Kidney (tissue), 22 donors: ENCODE measurements at regions of chr1 and their contacts with region 1.

Region 1: DNA sequence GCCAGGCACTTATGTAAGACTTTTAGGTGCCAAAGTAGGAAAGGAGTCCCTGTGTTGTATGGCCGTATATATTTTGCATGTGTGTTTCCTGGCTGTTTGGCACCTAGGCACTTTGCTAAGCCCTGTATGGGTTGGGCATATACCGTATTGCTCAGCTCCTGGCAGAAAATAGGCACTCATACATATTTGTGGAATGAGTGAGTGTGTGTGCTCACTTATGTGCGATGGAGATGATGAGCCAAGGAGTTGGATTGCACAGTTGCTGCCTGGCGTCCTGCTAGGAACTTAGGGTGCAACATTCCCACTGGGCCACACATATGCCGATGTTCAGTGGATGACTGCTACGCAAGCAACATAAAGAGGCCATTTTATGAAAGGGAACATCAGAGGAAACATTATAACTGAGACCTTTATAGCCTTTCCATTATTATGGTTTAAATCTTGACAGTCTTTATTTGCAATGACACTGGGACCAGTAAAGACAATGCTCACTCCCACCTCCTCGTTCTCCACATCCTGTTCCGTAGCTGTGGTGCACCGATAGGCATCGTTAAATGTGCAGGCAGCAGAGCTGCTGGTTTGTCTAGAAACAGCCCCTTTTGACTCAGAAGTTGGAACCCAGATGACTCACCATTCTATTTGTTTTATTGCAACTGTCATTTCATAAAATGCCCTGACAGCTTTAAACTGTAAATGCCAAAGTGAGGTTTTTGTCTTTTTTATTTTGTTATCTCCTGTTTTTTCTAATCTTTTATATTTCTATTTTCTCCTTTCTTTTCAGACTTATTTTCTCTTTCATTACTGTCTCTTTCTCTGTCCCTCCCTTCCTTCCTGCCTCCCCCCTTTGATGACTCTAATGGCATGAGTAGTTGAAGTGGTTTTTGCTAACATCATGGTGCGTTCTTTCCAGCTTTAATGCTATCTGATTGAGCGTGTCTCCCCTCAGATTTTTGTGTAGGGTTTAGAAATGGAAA is 36.1 kb downstream of the PEX14 start:
- DNase-seq: no peak
- H3K4me3 ChIP-seq: peak overlapping the region in 1 of 3 donors; percentile 21
- H3K27ac ChIP-seq: no peak overlapping the region
- H3K4me1 ChIP-seq: peaks cover 0 to 23% (median 16%) of the 10 kb centered on the region in 3 donors
- H3K27me3 ChIP-seq: no peaks in the 10 kb centered on the region
- CTCF ChIP-seq: no peak

Region 2: DNA sequence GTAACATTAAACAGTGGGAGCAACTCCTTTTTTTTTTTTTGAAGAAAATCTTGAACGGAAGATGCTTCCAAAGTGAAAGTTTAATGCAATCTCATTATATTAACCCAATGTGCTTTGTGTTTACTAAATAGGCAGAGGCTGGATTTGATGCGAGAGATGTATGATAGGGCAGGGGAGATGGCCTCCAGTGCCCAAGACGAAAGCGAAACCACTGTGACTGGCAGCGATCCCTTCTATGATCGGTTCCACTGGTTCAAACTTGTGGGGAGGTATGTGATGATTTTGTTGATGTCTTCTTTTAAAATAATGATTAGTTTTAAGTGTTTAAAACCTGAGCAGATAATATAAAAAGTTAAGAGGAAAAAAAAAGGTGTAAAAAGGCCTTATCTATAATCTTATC is 186.2 kb before region 1 on chr1:
- intact Hi-C with region 1: no loop called
- DNase-seq: no peak
- H3K4me3 ChIP-seq: no peak overlapping the region
- H3K27ac ChIP-seq: no peak overlapping the region
- H3K4me1 ChIP-seq: no peaks in the 10 kb centered on the region
- H3K27me3 ChIP-seq: no peaks in the 10 kb centered on the region
- CTCF ChIP-seq: no peak

Region 3: GRCh38 chr1:10867138-10867721 is 356.4 kb after region 1 on chr1:
- intact Hi-C with region 1: loop called (anchors 10 kb)
- DNase-seq: peak; percentile 63 to 85 (median 79)
- H3K4me3 ChIP-seq: no peak overlapping the region
- H3K27ac ChIP-seq: no peak overlapping the region
- H3K4me1 ChIP-seq: peaks cover 0 to 4% (median 4%) of the 10 kb centered on the region in 3 donors
- H3K27me3 ChIP-seq: peaks cover 3% of the 10 kb centered on the region
- CTCF ChIP-seq: peak; percentile 63